ENCODE measurements at regions of chr7 and their contacts with region 1.

Region 1: GRCh38 chr7:12686894-12687717 is at the start of gene ARL4A:
- DNase-seq: peak; percentile 100
- H3K4me3 Mint-ChIP-seq: peak within 1 kb of the TSS; percentile 87
- H3K27ac Mint-ChIP-seq: peak within 1 kb of the TSS; percentile 89
- H3K4me1 Mint-ChIP-seq: no peaks in the 10 kb centered on the region
- H3K27me3 Mint-ChIP-seq: no peaks in the 10 kb centered on the region
- CTCF ChIP-seq: peak; percentile 57
- total RNA-seq, gene ARL4A: 30.7 and 42.6 TPM in 2 replicates

Region 2: DNA sequence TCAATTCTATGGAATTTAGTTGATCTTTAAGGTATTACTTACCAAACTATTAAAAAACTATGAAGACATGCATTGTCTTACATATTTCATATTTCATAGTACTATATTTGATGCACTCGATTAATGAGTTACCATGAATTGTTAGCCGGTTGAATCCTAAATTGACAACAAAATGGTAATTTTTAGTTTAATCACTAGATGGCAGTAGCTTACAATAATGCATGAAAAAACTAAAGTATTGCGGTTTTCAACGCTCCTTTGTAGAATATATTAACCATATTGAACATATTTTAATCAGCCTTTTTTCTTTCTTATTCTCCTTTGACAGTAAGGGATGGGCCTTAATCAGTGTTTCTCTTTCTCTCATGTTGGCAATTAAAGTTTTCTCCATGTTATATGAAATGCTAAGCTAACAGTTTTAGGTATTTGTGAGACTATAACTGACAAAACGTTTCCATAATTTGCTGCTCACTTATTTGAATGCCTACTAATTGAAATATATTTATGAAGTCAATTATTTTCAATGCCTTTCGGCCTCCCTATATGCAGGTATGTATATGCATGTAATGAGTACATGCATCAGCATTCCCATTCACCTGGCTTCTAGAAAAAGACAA is 48.1 kb before region 1 on chr7:
- CTCF ChIA-PET with region 1: interaction called, 20 read pairs
- POLR2A ChIA-PET with region 1: no interaction called
- intact Hi-C with region 1: loop called (anchors 1 kb)
- DNase-seq: peak; percentile 50
- H3K4me3 Mint-ChIP-seq: no peak overlapping the region
- H3K27ac Mint-ChIP-seq: no peak overlapping the region
- H3K4me1 Mint-ChIP-seq: no peaks in the 10 kb centered on the region
- H3K27me3 Mint-ChIP-seq: no peaks in the 10 kb centered on the region
- CTCF ChIP-seq: peak; percentile 50

Region 3: GRCh38 chr7:12715372-12716133 is 28.4 kb after region 1 on chr7:
- CTCF ChIA-PET with region 1: interaction called, 9 read pairs
- POLR2A ChIA-PET with region 1: interaction called, 159 read pairs
- intact Hi-C with region 1: loop called (anchors 1 kb)
- DNase-seq: peak; percentile 98
- H3K4me3 Mint-ChIP-seq: peak overlapping the region; percentile 76
- H3K27ac Mint-ChIP-seq: peak overlapping the region; percentile 92
- H3K4me1 Mint-ChIP-seq: peaks cover 53% of the 10 kb centered on the region
- H3K27me3 Mint-ChIP-seq: no peaks in the 10 kb centered on the region
- CTCF ChIP-seq: no peak

Region 4: GRCh38 chr7:12990440-12990839 is 303.3 kb after region 1 on chr7:
- CTCF ChIA-PET with region 1: interaction called, 11 read pairs
- POLR2A ChIA-PET with region 1: interaction called, 3 read pairs
- intact Hi-C with region 1: no loop called
- DNase-seq: no peak
- H3K4me3 Mint-ChIP-seq: no peak overlapping the region
- H3K27ac Mint-ChIP-seq: no peak overlapping the region
- H3K4me1 Mint-ChIP-seq: peaks cover 10% of the 10 kb centered on the region
- H3K27me3 Mint-ChIP-seq: no peaks in the 10 kb centered on the region
- CTCF ChIP-seq: no peak

Region 5: GRCh38 chr7:13042612-13043240 is 355.6 kb after region 1 on chr7:
- CTCF ChIA-PET with region 1: no interaction called
- POLR2A ChIA-PET with region 1: no interaction called
- intact Hi-C with region 1: loop called (anchors 5 kb)
- DNase-seq: peak; percentile 38
- H3K4me3 Mint-ChIP-seq: no peak overlapping the region
- H3K27ac Mint-ChIP-seq: peak overlapping the region; percentile 80
- H3K4me1 Mint-ChIP-seq: peaks cover 19% of the 10 kb centered on the region
- H3K27me3 Mint-ChIP-seq: no peaks in the 10 kb centered on the region
- CTCF ChIP-seq: no peak

Region 6: DNA sequence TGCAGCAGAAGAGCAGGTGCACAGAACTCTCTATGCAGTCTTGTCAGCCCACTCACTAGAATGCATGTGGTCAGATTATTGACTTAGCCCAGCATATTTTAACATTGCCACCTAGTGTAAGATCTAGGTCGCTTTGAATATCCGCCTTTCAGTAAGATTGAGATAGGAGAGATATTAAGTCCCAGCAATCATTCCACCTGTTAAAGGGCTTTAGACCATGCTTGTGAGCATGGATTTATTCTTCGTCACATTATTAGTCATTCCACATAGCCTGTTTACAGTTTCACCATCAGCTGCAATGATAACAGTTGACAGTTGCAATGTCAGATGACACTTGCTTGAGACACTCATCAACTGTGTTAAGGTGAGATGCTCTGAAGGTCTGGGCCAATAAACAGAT is 492.0 kb after region 1 on chr7:
- CTCF ChIA-PET with region 1: interaction called, 7 read pairs
- POLR2A ChIA-PET with region 1: interaction called, 4 read pairs
- intact Hi-C with region 1: loop called (anchors 1 kb)
- DNase-seq: peak; percentile 23
- H3K4me3 Mint-ChIP-seq: no peak overlapping the region
- H3K27ac Mint-ChIP-seq: no peak overlapping the region
- H3K4me1 Mint-ChIP-seq: no peaks in the 10 kb centered on the region
- H3K27me3 Mint-ChIP-seq: no peaks in the 10 kb centered on the region
- CTCF ChIP-seq: no peak

Measured in MCF 10A (cell line).